GM12878 (cell line): ENCODE measurements at regions of chr16 and their contacts with region 1.

Region 1: DNA sequence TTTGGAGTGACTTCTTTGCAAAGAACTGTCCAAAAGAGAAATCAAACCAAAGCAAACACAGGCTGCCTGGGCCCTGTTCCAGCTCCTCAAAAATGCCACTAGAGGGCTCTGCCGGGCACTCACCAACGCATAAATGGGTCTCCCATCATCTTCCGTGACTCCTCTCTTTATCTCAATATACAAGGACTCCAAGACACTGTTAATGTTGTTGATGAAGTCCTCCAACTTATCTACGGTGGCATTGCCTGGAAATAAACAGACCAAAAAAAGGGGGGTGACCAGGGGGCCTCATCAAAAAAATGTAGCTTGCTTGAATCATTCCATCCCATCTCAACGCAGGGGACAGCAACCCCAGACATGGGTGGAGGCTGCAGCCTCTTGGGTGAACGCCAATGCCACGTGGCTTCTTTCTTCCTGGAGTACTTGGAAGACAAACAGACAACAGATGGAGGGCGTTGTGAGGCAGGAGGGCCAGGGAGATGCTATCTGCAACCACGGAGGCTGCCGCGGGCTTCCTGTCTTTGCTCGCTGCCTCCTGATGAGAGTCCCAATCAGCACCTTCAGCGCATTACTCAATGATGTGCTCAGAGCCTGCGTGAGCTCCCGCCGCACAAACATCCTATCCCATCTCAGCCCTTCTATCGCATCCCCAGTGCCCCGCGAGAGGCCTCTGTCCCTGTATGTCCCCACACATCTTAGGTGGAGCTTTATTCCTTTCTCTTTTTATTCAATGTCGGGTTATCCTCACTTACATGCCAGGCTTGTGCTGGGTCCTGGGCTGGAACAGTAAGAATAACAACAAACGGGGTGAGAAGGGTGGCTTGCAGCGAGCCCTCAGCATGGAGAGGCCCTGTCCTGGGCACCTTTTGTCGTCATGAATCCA is 32.0 kb downstream of the KDM8 start:
- DNase-seq: peak; percentile 38
- ATAC-seq: peak; percentile 49
- H3K4me3 ChIP-seq: no peak overlapping the region
- H3K27ac ChIP-seq: no peak overlapping the region
- H3K4me1 ChIP-seq: peaks cover 56% of the 10 kb centered on the region
- H3K27me3 ChIP-seq: no peaks in the 10 kb centered on the region
- CTCF ChIP-seq: peak; percentile 88 to 95 (median 89); a peak in 5 of 6 replicates
- EP300 ChIP-seq: no peak
- POLR2A ChIP-seq: no peak
- RAD21 ChIP-seq: peak; percentile 90

Region 2: GRCh38 chr16:27179500-27180072 is 55.7 kb before region 1 on chr16:
- CTCF ChIA-PET with region 1: interaction called, 68 read pairs
- POLR2A ChIA-PET with region 1: no interaction called
- RAD21 ChIA-PET with region 1: interaction called, 27 read pairs
- SMC1A ChIA-PET with region 1: interaction called, 32 read pairs
- in situ Hi-C with region 1: no loop called
- intact Hi-C with region 1: loop called (anchors 2 kb)
- DNase-seq: peak; percentile 55
- ATAC-seq: peak; percentile 98
- H3K4me3 ChIP-seq: no peak overlapping the region
- H3K27ac ChIP-seq: no peak overlapping the region
- H3K4me1 ChIP-seq: no peaks in the 10 kb centered on the region
- H3K27me3 ChIP-seq: no peaks in the 10 kb centered on the region; a peak in 1 of 4 replicates
- CTCF ChIP-seq: peak; percentile 98 to 99 (median 98); a peak in 5 of 6 replicates
- EP300 ChIP-seq: no peak
- POLR2A ChIP-seq: no peak
- RAD21 ChIP-seq: peak; percentile 91

Region 3: DNA sequence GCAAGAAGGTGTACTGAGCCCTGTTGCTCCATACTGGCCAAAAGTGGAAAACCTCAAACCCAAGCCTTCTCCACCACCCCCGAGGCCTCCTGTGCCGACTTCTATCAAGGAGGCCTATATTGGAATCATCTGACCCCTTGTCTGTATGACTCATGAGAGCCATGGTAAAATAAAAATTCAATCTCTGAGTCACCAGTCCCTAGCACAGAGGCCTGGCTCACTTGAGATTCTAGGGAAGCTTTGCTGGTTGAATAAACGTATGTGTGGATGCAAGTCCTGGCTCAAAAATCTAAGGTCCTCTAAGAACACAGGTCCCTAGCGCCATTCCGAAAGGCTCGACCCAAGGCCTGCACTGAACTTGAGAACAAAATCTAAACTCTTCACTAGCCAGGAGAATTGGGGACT is 18.2 kb after region 1 on chr16:
- CTCF ChIA-PET with region 1: interaction called, 38 read pairs
- POLR2A ChIA-PET with region 1: interaction called, 79 read pairs
- RAD21 ChIA-PET with region 1: interaction called, 51 read pairs
- SMC1A ChIA-PET with region 1: interaction called, 165 read pairs
- in situ Hi-C with region 1: no loop called
- intact Hi-C with region 1: no loop called
- DNase-seq: no peak
- ATAC-seq: peak; percentile 27
- H3K4me3 ChIP-seq: no peak overlapping the region
- H3K27ac ChIP-seq: peak overlapping the region; percentile 74
- H3K4me1 ChIP-seq: peaks cover 25% of the 10 kb centered on the region
- H3K27me3 ChIP-seq: no peaks in the 10 kb centered on the region
- CTCF ChIP-seq: no peak
- EP300 ChIP-seq: no peak
- POLR2A ChIP-seq: no peak
- RAD21 ChIP-seq: no peak

Region 4: GRCh38 chr16:27286451-27286850 is 51.2 kb after region 1 on chr16:
- CTCF ChIA-PET with region 1: interaction called, 47 read pairs
- POLR2A ChIA-PET with region 1: interaction called, 10 read pairs
- RAD21 ChIA-PET with region 1: interaction called, 20 read pairs
- SMC1A ChIA-PET with region 1: interaction called, 65 read pairs
- in situ Hi-C with region 1: no loop called
- intact Hi-C with region 1: no loop called
- DNase-seq: no peak
- ATAC-seq: no peak
- H3K4me3 ChIP-seq: no peak overlapping the region
- H3K27ac ChIP-seq: no peak overlapping the region
- H3K4me1 ChIP-seq: peaks cover 40% of the 10 kb centered on the region
- H3K27me3 ChIP-seq: 0 out of 4 replicates have a peak, but pooled peaks cover 0 to 3% of the 10 kb centered on the region in 2 experiments
- CTCF ChIP-seq: no peak
- EP300 ChIP-seq: no peak
- POLR2A ChIP-seq: no peak
- RAD21 ChIP-seq: no peak

Region 5: DNA sequence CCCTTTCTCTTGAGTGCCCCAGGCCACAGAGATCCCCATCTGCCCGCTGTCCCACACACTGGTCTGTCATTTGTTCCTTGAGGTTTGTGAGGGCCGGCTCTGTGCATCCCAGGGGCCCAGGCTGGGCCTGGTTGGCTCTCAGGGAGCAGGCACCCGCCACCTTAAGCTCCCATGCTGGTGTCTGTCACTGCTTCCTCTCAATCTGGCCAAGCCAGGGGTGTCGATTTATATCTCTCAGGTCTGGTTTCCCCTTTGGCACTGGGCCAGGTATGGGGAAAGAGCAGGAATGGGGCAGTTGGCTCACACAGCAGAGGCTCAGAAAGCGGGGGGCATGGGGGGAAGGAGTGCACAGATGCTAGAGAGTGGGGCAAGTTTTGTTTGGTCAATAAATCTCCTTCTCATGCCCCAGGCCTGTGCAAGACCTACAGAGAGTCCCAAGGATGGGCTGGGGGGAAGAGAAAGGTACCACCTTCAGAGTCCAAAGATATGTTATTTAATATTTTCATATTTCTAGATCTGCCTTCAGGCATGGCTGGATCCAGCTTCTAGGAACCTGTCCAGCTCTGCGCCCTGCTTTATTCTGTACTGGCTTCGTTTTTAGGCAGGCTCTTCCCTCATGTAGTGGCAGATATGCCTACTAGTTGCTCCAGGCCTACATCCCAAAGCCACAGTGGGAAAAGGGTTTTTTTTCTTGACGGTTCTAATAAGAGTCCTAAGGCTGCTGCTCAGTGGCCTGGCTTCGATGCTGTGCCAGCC is 112.8 kb after region 1 on chr16:
- CTCF ChIA-PET with region 1: interaction called, 10 read pairs
- POLR2A ChIA-PET with region 1: no interaction called
- RAD21 ChIA-PET with region 1: interaction called, 8 read pairs
- SMC1A ChIA-PET with region 1: interaction called, 8 read pairs
- in situ Hi-C with region 1: no loop called
- intact Hi-C with region 1: no loop called
- DNase-seq: no peak
- ATAC-seq: no peak
- H3K4me3 ChIP-seq: no peak overlapping the region
- H3K27ac ChIP-seq: no peak overlapping the region
- H3K4me1 ChIP-seq: no peaks in the 10 kb centered on the region
- H3K27me3 ChIP-seq: no peaks in the 10 kb centered on the region
- CTCF ChIP-seq: no peak
- EP300 ChIP-seq: no peak
- POLR2A ChIP-seq: no peak
- RAD21 ChIP-seq: no peak

Region 6: DNA sequence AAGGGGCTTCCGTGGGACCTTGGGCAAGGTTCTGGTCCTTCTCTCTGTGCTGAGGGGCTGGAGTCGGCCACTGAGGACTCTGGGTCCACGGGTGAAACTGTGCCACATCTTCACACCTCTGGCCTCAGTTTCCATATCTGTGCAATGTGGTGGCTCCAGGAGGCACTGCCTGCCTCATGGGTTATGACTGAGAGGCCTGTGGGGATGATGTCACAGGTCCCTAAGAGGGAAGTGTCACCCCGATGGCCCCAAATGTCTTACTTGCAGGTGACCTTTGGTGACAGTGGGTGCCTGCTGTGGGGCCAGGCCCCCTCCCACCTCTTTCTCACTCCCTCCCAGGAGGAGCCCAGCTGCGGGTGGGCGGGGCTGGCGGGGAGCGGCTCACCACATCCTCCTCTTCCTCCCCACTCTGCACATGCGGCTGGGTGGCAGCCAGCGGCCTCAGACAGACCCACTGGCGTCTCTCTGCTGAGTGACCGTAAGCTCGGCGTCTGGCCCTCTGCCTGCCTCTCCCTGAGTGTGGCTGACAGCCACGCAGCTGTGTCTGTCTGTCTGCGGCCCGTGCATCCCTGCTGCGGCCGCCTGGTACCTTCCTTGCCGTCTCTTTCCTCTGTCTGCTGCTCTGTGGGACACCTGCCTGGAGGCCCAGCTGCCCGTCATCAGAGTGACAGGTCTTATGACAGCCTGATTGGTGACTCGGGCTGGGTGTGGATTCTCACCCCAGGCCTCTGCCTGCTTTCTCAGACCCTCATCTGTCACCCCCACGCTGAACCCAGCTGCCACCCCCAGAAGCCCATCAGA is 166.7 kb after region 1 on chr16 and contains the start of gene IL21R:
- CTCF ChIA-PET with region 1: interaction called, 11 read pairs
- POLR2A ChIA-PET with region 1: interaction called, 6 read pairs
- RAD21 ChIA-PET with region 1: interaction called, 16 read pairs
- SMC1A ChIA-PET with region 1: interaction called, 28 read pairs
- in situ Hi-C with region 1: no loop called
- intact Hi-C with region 1: loop called (anchors 2 kb)
- DNase-seq: peak; percentile 85
- ATAC-seq: peak; percentile 56
- H3K4me3 ChIP-seq: peak within 1 kb of the TSS; percentile 86
- H3K27ac ChIP-seq: peak within 1 kb of the TSS; percentile 97
- H3K4me1 ChIP-seq: peaks cover 53% of the 10 kb centered on the region
- H3K27me3 ChIP-seq: no peaks in the 10 kb centered on the region
- CTCF ChIP-seq: no peak
- EP300 ChIP-seq: peak in 1 of 2 experiments; percentile 73; a peak in 2 of 4 replicates
- POLR2A ChIP-seq: peak; percentile 95
- RAD21 ChIP-seq: 0 out of 2 replicates have a peak, but pooled peaks have one; percentile 7
- polyA plus RNA-seq, gene IL21R: 5.3 to 9.7 TPM

Region 7: GRCh38 chr16:27455700-27456099 is 220.4 kb after region 1 on chr16:
- CTCF ChIA-PET with region 1: interaction called, 24 read pairs
- POLR2A ChIA-PET with region 1: no interaction called
- RAD21 ChIA-PET with region 1: interaction called, 10 read pairs
- SMC1A ChIA-PET with region 1: interaction called, 26 read pairs
- in situ Hi-C with region 1: loop called (anchors 5 kb)
- intact Hi-C with region 1: loop called (anchors 1 kb)
- DNase-seq: no peak
- ATAC-seq: no peak
- H3K4me3 ChIP-seq: no peak overlapping the region
- H3K27ac ChIP-seq: no peak overlapping the region
- H3K4me1 ChIP-seq: peaks cover 25% of the 10 kb centered on the region
- H3K27me3 ChIP-seq: no peaks in the 10 kb centered on the region
- CTCF ChIP-seq: no peak
- EP300 ChIP-seq: no peak
- POLR2A ChIP-seq: 0 out of 2 replicates have a peak, but pooled peaks have one; percentile 36
- RAD21 ChIP-seq: no peak